Sigmoid colon (tissue), 7 donors: ENCODE measurements at regions of chr5 and their contacts with region 1.

Region 1: DNA sequence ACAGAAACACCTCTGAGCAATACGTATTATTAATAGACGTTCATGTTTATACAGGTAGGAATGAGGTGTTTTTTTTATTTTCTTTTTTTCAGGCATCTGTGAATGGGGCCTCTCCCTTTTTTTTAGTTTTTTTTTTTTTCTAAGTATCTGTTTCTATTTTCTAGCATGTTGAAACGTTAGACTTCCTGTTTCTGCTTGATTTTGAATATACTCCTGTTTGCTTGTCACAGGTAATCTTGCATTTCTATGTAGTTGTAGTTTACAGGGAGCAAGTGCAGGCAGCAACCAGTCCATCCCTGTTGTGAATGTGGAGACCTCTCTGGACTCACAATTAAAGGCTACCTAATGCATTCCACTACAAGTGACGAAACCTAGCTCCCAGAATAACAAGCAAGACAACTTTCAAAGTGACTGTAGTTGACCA is 22.8 kb upstream of the TNFAIP8 start:
- DNase-seq: no peak
- H3K4me3 ChIP-seq: no peak overlapping the region
- H3K27ac ChIP-seq: no peak overlapping the region
- H3K4me1 ChIP-seq: peaks cover 0 to 56% (median 44%) of the 10 kb centered on the region in 4 donors
- H3K27me3 ChIP-seq: no peaks in the 10 kb centered on the region
- CTCF ChIP-seq: no peak
- EP300 ChIP-seq: no peak
- POLR2A ChIP-seq: no peak

Region 2: DNA sequence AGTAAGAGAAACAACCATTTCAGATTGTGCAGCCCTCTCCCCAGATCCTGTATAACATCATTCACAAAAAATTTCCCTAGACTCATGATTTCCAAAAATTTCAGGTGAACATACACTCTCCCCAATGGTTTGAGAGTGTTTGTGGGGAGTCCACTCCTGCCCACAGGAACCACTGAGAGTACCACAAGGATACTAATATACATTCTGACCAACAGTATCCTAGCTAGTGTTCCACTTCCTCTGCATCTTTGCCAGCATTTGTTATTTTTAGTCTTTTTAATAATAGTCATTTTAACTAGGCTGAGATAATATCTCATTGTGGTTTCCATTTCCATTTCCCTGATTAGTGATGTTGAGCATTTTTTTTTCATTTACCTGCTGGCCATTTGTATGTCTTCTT is 500.0 kb before region 1 on chr5:
- intact Hi-C with region 1: no loop called
- DNase-seq: no peak
- H3K4me3 ChIP-seq: no peak overlapping the region
- H3K27ac ChIP-seq: no peak overlapping the region
- H3K4me1 ChIP-seq: no peaks in the 10 kb centered on the region
- H3K27me3 ChIP-seq: no peaks in the 10 kb centered on the region
- CTCF ChIP-seq: no peak
- EP300 ChIP-seq: no peak
- POLR2A ChIP-seq: no peak

Region 3: DNA sequence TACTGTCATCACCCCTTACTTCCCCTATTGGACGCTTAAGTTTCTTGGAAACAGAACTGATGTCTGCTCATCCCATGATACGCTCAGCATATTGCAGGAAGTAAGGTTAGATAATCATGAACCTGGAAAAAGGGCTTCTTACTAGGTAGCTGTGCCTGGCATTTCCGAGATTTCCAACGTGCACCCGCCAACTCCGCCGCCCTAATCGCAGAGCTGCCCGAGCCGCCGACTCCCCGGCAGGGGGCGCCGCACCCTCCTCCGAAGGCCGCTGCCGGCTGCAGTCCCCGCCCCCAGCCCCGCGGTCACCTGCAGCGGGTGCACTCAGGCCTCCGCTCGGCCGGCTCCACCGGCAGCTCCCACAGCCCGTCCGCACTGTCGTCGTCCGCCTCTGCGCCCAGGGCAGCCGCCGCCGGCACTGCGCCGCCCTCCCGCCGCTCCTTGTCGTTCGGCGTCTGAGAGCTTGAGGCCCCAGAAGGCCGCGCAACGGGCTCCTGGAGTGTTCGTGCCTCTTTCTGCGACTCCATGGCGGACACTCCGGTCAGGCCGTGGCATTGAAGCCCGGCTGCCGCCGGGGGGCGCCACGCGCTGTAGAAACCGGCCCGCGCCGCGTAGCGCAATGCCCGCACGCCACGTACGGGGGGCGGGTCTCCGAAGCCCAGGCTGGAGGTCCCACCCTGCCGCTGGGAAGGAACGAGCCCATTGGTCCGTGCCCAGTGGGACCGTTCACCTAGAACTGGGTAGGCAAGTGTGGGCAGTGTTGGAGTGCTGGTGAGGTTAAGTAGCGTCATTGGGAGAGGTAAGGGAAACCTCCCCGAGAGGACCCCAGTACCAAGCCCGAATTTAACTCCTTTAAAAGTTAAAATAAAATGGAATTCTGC is 344.8 kb before region 1 on chr5 and contains the start of gene DTWD2:
- intact Hi-C with region 1: loop called (anchors 5 kb)
- DNase-seq: peak; percentile 93
- H3K4me3 ChIP-seq: peak within 1 kb of the TSS; percentile 59 to 76 (median 66)
- H3K27ac ChIP-seq: peak within 1 kb of the TSS; percentile 86 to 95 (median 90)
- H3K4me1 ChIP-seq: peaks cover 0 to 16% (median 12%) of the 10 kb centered on the region in 4 donors
- H3K27me3 ChIP-seq: no peaks in the 10 kb centered on the region
- CTCF ChIP-seq: peak; percentile 74 to 94 (median 80)
- EP300 ChIP-seq: no peak
- POLR2A ChIP-seq: no peak
- total RNA-seq, gene DTWD2: 4.6 to 10.4 (median 7.9) TPM

Region 4: DNA sequence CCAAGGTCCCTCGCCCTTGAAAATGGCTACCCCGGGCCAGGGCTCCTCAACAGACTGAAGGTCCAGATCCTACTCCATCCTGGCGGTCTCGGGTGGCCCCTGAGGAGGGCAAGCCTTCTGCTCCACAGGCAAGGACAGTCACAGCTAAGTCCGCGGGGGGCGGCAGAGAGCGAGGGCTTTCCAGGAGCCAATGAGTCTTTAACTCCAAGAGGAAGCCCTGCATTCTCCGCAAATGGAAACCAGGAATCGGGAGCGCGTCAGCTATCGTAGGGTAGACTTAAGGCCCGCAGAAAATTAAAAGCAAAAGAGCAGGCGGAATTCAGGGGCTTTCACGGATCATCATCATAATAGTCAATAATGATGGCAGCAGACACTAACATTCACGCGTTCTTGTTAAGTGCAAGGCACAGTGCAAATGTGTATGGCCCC is 65.0 kb before region 1 on chr5:
- intact Hi-C with region 1: loop called (anchors 2 kb)
- DNase-seq: peak; percentile 97
- H3K4me3 ChIP-seq: peak overlapping the region; percentile 50 to 84 (median 78)
- H3K27ac ChIP-seq: peak overlapping the region; percentile 89 to 96 (median 92)
- H3K4me1 ChIP-seq: peaks cover 0 to 28% (median 15%) of the 10 kb centered on the region in 4 donors
- H3K27me3 ChIP-seq: no peaks in the 10 kb centered on the region
- CTCF ChIP-seq: peak in 3 of 4 experiments; percentile 15 to 31 (median 29)
- EP300 ChIP-seq: no peak
- POLR2A ChIP-seq: no peak